Natural killer cell (primary cell): ENCODE measurements at regions of chr3 and their contacts with region 1.

Region 1: GRCh38 chr3:97793420-97794019 is 28.3 kb upstream of the CRYBG3 start:
- DNase-seq: peak in 1 of 2 donors; percentile 84
- ATAC-seq: peak; percentile 62 to 66 (median 64)
- H3K4me3 ChIP-seq: no peak overlapping the region
- H3K4me3 Mint-ChIP-seq: no peak overlapping the region
- H3K27ac ChIP-seq: no peak overlapping the region
- H3K27ac Mint-ChIP-seq: no peak overlapping the region
- H3K4me1 ChIP-seq: no peaks in the 10 kb centered on the region
- H3K4me1 Mint-ChIP-seq: no peaks in the 10 kb centered on the region
- H3K27me3 ChIP-seq: no peaks in the 10 kb centered on the region
- H3K27me3 Mint-ChIP-seq: no peaks in the 10 kb centered on the region
- CTCF ChIP-seq: peak; percentile 88

Region 2: GRCh38 chr3:98022978-98023820 is 229.7 kb after region 1 on chr3:
- intact Hi-C with region 1: loop called (anchors 1 kb)
- DNase-seq: peak; percentile 86 to 89
- ATAC-seq: peak; percentile 72 to 80 (median 77)
- H3K4me3 ChIP-seq: no peak overlapping the region
- H3K4me3 Mint-ChIP-seq: no peak overlapping the region
- H3K27ac ChIP-seq: no peak overlapping the region
- H3K27ac Mint-ChIP-seq: no peak overlapping the region
- H3K4me1 ChIP-seq: no peaks in the 10 kb centered on the region
- H3K4me1 Mint-ChIP-seq: no peaks in the 10 kb centered on the region
- H3K27me3 ChIP-seq: no peaks in the 10 kb centered on the region
- H3K27me3 Mint-ChIP-seq: peaks cover 0 to 8% of the 10 kb centered on the region in 2 donors
- CTCF ChIP-seq: peak; percentile 97